CD4-positive, alpha-beta T cell (primary cell): ENCODE measurements at regions of chr18 and their contacts with region 1.

Region 1: GRCh38 chr18:55316486-55317184 is 271.4 kb downstream of the TCF4 start:
- DNase-seq: no peak
- ATAC-seq: no peak
- H3K4me3 ChIP-seq: no peak overlapping the region
- H3K4me3 Mint-ChIP-seq: no peak overlapping the region
- H3K27ac ChIP-seq: no peak overlapping the region
- H3K27ac Mint-ChIP-seq: no peak overlapping the region
- H3K4me1 ChIP-seq: no peaks in the 10 kb centered on the region
- H3K4me1 Mint-ChIP-seq: peaks cover 15% of the 10 kb centered on the region
- H3K27me3 ChIP-seq: peaks cover 9 to 10% of the 10 kb centered on the region in 2 experiments
- H3K27me3 Mint-ChIP-seq: peaks cover 16% of the 10 kb centered on the region
- CTCF ChIP-seq: no peak

Region 2: DNA sequence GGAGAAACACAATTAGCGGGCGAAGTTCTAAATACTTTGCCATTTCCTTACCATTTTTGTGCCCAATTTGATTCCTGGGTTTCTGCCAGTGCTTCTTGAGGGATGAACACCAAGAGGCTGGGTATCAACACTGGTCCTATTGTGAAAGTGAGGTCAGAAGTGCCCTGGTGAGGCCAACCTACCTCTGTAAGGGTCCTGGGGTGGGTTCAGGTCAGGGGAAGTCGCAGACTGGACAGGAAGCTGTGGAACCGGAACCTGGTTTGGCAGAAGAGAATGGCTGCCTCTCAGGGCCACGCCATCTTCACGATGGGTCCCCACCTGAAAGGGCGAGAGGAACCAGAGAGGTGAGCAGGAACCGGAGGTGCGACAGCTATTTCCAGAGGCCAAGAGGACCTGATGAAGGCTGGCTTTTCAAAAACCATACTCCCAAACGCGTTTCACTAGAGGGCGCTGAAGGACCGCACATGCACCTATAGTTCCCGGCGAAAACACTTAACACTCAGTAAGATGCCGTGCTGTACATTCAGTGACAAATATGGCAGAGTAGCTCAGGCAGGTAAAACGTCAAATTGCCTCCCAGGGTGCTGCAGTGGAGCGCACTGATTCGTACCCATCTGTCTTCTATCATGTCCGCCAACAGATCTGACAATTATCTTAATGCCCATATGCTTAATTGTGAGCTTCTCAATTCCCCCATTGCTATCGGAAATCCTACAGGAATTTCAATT is 82.1 kb before region 1 on chr18:
- CTCF ChIA-PET with region 1: no interaction called
- POLR2A ChIA-PET with region 1: no interaction called
- intact Hi-C with region 1: no loop called
- DNase-seq: peak in 11 of 14 experiments; percentile 2 to 62 (median 26)
- ATAC-seq: peak; percentile 54
- H3K4me3 ChIP-seq: no peak overlapping the region
- H3K4me3 Mint-ChIP-seq: no peak overlapping the region
- H3K27ac ChIP-seq: no peak overlapping the region
- H3K27ac Mint-ChIP-seq: no peak overlapping the region
- H3K4me1 ChIP-seq: no peaks in the 10 kb centered on the region
- H3K4me1 Mint-ChIP-seq: no peaks in the 10 kb centered on the region
- H3K27me3 ChIP-seq: no peaks in the 10 kb centered on the region
- H3K27me3 Mint-ChIP-seq: no peaks in the 10 kb centered on the region
- CTCF ChIP-seq: no peak

Region 3: DNA sequence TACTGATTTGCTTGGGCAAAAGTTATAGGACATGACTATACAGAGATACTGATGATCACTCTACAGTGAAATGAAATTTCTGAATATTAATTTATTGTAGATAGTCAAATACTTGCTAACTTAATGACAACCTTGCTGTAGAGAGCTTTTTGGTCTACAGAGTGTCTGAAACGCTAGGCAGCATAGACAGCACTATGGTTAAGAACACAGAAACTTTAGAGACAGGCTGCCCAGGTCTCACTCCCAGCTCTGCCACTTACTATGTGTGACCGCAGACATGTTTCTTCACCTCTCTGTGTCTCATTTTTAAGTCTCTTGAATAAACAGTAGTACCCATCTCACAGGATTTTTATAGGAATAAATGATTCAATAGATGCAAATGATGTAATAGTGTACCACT is 24.4 kb after region 1 on chr18:
- CTCF ChIA-PET with region 1: no interaction called
- POLR2A ChIA-PET with region 1: no interaction called
- intact Hi-C with region 1: loop called in 1 of 2 experiments (anchors 1 kb)
- DNase-seq: no peak
- ATAC-seq: no peak
- H3K4me3 ChIP-seq: no peak overlapping the region
- H3K4me3 Mint-ChIP-seq: no peak overlapping the region
- H3K27ac ChIP-seq: no peak overlapping the region
- H3K27ac Mint-ChIP-seq: no peak overlapping the region
- H3K4me1 ChIP-seq: no peaks in the 10 kb centered on the region
- H3K4me1 Mint-ChIP-seq: no peaks in the 10 kb centered on the region
- H3K27me3 ChIP-seq: no peaks in the 10 kb centered on the region
- H3K27me3 Mint-ChIP-seq: no peaks in the 10 kb centered on the region
- CTCF ChIP-seq: no peak